ENCODE measurements at regions of chr22 and their contacts with region 1.

Region 1: GRCh38 chr22:37601540-37602442 is 6.8 kb upstream of the GGA1 start:
- DNase-seq: no peak
- H3K4me3 ChIP-seq: no peak overlapping the region
- H3K4me3 Mint-ChIP-seq: no peak overlapping the region
- H3K27ac ChIP-seq: no peak overlapping the region
- H3K27ac Mint-ChIP-seq: peak overlapping the region in 3 of 7 donors; percentile 24 to 52 (median 48)
- H3K4me1 ChIP-seq: peaks cover 27% of the 10 kb centered on the region
- H3K4me1 Mint-ChIP-seq: peaks cover 22 to 34% (median 29%) of the 10 kb centered on the region in 4 donors
- H3K27me3 ChIP-seq: no peaks in the 10 kb centered on the region
- H3K27me3 Mint-ChIP-seq: peaks cover 0 to 3% of the 10 kb centered on the region in 2 donors

Region 2: GRCh38 chr22:37588546-37589215 is 13.1 kb before region 1 on chr22:
- CTCF ChIA-PET with region 1: interaction called, 122 read pairs
- POLR2A ChIA-PET with region 1: interaction called, 43 read pairs
- intact Hi-C with region 1: no loop called
- DNase-seq: no peak
- H3K4me3 ChIP-seq: no peak overlapping the region
- H3K4me3 Mint-ChIP-seq: no peak overlapping the region
- H3K27ac ChIP-seq: no peak overlapping the region
- H3K27ac Mint-ChIP-seq: peak overlapping the region in 1 of 7 donors; percentile 55
- H3K4me1 ChIP-seq: peaks cover 6% of the 10 kb centered on the region
- H3K4me1 Mint-ChIP-seq: peaks cover 9 to 14% (median 11%) of the 10 kb centered on the region in 4 donors
- H3K27me3 ChIP-seq: no peaks in the 10 kb centered on the region
- H3K27me3 Mint-ChIP-seq: peaks cover 11 to 12% of the 10 kb centered on the region in 2 donors